Cardiac septum (tissue), 1 donor: ENCODE measurements at regions of chr3 and their contacts with region 1.

Region 1: DNA sequence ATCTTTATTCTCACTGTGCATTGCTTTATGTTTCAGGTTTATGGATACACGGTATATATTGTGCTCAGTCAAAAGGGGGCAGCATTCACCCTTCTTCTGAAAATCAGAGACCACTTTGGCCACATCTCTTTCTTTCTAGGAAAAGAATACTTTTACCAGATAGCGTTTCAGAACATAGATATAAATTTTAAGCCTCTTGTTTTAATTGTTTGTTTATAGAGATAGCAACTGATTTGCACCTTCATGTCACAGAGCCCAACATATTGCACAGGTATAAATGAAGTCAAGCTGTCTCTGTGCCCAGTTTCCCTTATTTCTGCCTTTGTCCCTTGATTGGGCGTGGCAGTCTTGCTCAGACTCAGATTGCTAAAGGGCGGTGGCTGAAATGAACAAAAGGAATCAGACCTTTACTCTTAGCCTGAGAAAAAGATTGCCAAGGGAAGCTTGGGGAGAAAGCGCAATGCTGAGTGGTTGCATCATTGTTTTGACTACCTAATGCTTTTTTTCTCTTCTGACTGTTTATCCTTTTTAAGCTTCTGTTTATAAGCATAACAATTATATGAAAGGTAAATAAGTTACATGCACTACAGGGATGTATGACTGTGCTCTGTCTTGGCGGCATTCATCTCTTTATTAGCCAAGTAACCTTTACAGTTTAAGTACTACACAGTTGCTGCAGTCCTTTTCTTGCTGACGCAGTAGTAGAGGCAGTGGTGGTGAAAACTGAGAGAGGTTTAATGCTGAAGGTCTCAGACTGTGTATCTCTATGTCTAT is 70.8 kb upstream of the ZBTB20 start:
- DNase-seq: no peak

Region 2: DNA sequence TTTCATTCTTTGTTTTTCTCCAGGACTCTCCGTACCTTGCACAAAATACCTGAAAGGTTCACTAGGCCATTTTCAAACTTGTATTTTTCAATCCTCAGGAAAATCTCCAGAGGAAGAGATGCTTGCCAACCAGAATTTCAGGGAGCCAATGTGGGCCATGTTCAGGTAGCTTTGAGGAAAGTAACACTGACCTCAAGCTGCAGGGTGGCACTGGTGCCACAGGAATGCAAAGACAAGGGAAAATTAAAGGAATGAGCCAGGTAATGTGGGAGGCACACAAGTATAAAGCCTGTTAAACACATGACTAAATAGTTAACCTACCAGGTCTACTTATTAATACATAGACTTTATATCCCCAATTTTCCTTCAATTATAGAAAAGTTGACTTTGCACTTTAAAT is 353.5 kb after region 1 on chr3:
- intact Hi-C with region 1: loop called (anchors 5 kb)
- DNase-seq: no peak